Left ventricle myocardium superior (tissue), 1 donor: ENCODE measurements at regions of chr6 and their contacts with region 1.

Region 1: GRCh38 chr6:12289933-12290820 is at the start of gene EDN1:
- DNase-seq: peak; percentile 83
- ATAC-seq: peak; percentile 95
- total RNA-seq, gene EDN1: 2.7 TPM

Region 2: DNA sequence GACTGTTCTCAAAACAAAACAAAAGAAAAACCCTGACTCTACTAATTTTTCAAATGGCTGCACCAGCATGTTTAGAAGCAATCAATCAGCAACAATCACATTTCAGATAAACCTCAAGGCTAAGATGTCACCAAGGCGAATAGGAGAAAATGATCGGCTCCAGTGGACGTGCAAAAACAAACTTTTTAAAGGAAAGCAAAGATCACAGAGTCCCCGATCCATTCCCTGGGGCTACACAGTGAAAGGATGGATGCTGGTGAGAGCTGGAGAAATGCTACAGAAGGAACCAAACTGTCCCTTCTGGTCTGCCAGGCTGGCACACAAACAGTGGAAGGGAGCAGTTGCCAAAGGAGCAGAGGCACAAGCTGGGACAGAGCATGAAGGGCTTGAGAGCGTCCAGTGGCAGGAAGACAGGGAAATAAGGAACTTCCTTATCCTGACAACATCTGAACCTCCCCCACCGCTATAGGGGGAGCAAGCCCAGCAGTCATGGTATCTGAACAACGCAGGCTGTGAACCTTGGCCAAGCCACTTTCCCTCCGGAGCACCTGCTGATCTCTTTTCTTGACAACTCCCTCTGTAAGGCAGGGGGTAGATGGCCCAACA is 351.8 kb before region 1 on chr6:
- intact Hi-C with region 1: no loop called
- DNase-seq: no peak
- ATAC-seq: no peak

Region 3: DNA sequence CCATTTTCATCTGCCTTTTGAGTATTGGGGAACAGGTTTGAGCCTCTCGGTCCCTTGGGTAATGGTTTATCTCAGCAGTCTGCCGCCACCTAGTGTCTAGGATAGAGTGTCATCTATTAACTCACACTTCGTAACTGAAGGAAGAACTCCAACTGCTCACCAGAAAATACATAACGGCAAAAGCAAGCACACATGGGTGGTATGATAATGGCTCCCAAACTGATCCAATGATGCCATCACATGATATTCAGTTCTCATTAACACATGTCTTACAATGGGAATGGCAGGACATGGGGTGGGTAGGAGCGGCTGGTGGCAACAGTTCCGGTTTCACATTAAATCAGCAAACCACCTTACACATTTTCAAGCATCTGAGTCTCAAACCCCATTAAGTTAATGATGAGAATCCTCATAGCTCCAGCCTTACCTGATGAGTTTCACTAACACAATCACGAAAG is 315.7 kb after region 1 on chr6:
- intact Hi-C with region 1: loop called (anchors 2 kb)
- DNase-seq: no peak
- ATAC-seq: peak; percentile 78